ENCODE measurements at regions of chr12 and their contacts with region 1.

Region 1: GRCh38 chr12:65937161-65937641 is 112.9 kb downstream of the HMGA2 start:
- DNase-seq: no peak
- H3K4me3 ChIP-seq: no peak overlapping the region
- H3K27ac ChIP-seq: no peak overlapping the region
- H3K4me1 ChIP-seq: peaks cover 0 to 22% (median 14%) of the 10 kb centered on the region in 4 experiments
- H3K27me3 ChIP-seq: no peaks in the 10 kb centered on the region

Region 2: DNA sequence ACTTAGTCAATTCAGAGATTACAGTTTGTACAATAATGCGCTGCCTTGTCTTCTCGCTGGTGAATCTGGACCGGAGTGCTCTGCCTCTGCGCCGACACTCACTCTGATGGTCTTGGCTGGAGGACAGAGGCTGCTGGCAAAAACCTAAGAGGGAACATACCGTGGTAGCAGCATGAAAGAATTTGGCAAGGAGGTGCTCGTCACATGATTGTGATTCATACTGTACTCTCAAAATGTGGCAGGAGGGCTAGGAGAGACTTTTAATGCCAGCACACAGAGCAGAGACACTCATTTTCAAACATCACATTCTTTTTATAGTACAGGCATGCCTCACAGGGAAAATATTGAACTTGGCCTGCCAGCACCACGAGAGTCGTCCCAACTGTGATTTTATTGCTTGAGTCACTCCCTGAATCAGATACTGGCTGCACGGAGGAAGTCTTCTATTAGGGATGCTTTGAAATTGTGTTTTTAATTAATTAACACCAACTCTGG is 45.2 kb before region 1 on chr12:
- CTCF ChIA-PET with region 1: no interaction called
- POLR2A ChIA-PET with region 1: no interaction called
- DNase-seq: peak; percentile 72 to 87 (median 82)
- H3K4me3 ChIP-seq: peak overlapping the region in 3 of 7 experiments; percentile 26 to 60 (median 58)
- H3K27ac ChIP-seq: peak overlapping the region; percentile 35 to 54
- H3K4me1 ChIP-seq: peaks cover 14 to 58% (median 45%) of the 10 kb centered on the region in 4 experiments
- H3K27me3 ChIP-seq: no peaks in the 10 kb centered on the region

Region 3: GRCh38 chr12:65948320-65949008 is 11.3 kb after region 1 on chr12:
- CTCF ChIA-PET with region 1: interaction called, 10 read pairs
- POLR2A ChIA-PET with region 1: no interaction called
- DNase-seq: peak in 1 of 3 donors; percentile 59
- H3K4me3 ChIP-seq: peak overlapping the region in 2 of 7 experiments; percentile 42 to 52
- H3K27ac ChIP-seq: peak overlapping the region in 1 of 2 experiments; percentile 55
- H3K4me1 ChIP-seq: peaks cover 0 to 18% (median 6%) of the 10 kb centered on the region in 4 experiments
- H3K27me3 ChIP-seq: no peaks in the 10 kb centered on the region